A673 (cell line): ENCODE measurements at regions of chr14 and their contacts with region 1.

Region 1: GRCh38 chr14:100159865-100160533 is 554 bp upstream of the DEGS2 start:
- DNase-seq: no peak
- H3K4me3 ChIP-seq: peak overlapping the region; percentile 40
- H3K27ac ChIP-seq: no peak overlapping the region
- H3K4me1 ChIP-seq: peaks cover 12% of the 10 kb centered on the region
- H3K27me3 ChIP-seq: peaks cover 31% of the 10 kb centered on the region
- CTCF ChIP-seq: no peak

Region 2: DNA sequence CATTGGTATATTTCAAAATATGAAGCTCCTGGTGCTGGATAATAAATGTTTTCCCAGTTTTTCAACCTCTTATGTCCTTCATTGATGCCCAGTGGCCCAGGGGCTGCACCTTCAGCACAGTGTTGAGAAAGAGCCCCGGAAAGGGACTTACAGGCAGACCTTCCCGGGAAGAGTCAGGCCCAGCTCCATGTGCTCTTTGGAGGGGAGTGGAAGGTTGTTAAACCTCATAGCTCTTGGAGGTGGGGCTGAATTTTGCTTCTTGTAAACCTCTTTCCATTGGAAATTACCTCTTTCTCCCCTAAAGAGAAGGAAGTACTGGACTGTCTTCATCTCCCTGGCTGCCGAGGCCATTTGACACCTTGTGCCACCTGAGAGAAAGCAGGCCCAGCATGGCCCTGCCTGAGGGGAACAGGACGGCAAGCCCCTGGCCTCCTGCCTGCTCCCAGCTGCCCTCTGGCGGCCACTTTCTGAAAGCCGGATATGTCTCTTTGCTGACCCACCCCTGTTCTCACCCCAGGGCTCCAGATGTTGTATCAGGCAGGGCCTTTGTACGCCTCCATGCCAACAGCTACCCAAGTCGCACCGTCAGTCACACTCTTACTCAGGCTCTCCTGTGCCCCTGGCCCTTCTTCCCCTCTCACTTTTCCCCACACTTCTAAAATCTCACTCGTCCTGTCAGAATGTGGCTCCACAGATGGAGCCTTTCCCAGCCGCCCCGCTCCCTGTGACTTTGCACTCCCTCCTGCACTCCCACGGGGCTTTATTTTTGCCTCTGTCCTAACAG is 51.8 kb before region 1 on chr14:
- CTCF ChIA-PET with region 1: no interaction called
- POLR2A ChIA-PET with region 1: no interaction called
- intact Hi-C with region 1: no loop called
- DNase-seq: peak; percentile 77
- H3K4me3 ChIP-seq: no peak overlapping the region
- H3K27ac ChIP-seq: no peak overlapping the region
- H3K4me1 ChIP-seq: peaks cover 13% of the 10 kb centered on the region
- H3K27me3 ChIP-seq: no peaks in the 10 kb centered on the region
- CTCF ChIP-seq: peak; percentile 87

Region 3: DNA sequence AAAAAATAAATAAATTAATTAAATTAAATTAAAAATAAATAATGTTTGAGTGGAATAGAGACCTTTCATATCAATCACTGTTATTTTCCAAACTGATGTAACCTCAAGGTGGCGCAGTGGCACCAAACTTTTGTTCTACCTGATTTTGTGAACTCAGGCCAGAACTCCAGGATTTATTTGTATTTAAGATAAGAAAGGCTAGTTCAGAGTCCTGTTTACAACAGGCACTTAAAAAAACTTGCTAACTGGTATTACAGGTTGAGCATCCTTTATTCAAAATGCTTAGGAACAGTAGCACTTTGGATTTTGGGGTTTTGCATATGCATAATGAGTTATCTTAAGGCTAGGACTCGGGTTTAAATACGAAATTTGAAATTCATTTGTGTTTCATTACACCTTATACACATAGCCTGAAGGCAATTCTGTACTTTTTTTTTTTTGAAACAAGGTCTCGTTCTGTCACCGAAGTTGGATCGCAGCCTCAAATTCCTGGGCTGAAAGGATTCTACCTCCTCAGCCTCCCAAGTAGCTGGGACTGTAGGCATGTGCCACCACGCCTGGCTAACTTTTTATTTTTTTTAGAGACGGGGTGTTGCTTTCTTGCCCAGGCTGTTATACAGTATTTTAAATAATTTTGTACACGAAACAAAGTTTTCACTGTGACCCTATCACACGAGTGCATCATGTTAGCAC is 111.4 kb after region 1 on chr14:
- CTCF ChIA-PET with region 1: interaction called, 14 read pairs
- POLR2A ChIA-PET with region 1: no interaction called
- intact Hi-C with region 1: no loop called
- DNase-seq: peak; percentile 21
- H3K4me3 ChIP-seq: no peak overlapping the region
- H3K27ac ChIP-seq: no peak overlapping the region
- H3K4me1 ChIP-seq: no peaks in the 10 kb centered on the region
- H3K27me3 ChIP-seq: no peaks in the 10 kb centered on the region
- CTCF ChIP-seq: peak; percentile 54